ENCODE measurements at regions of chr2 and their contacts with region 1.

Region 1: DNA sequence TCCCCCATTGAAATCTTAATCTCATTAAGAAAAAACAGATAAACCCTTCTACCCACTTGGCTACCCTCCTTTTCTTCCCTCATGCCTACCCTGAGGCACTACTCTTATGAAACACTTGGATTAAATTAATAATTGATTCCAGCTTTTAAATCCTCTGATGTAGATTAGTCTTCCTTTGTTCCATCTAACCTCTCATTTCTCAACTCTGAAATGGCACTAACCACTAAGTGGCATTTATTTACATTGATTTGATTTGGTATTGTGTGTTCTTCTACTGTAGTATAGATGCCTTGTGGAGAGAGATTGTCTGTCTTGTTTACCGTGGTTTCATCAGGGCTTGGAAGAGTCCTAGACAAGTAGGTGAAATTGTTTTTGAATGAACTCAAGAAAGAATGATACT is 26.7 kb downstream of the ITGA4 start:
- DNase-seq: no peak
- H3K4me3 Mint-ChIP-seq: no peak overlapping the region
- H3K27ac Mint-ChIP-seq: peak overlapping the region; percentile 51
- H3K4me1 Mint-ChIP-seq: peaks cover 15% of the 10 kb centered on the region
- H3K27me3 Mint-ChIP-seq: no peaks in the 10 kb centered on the region

Region 2: GRCh38 chr2:181500201-181500600 is 16.3 kb after region 1 on chr2:
- intact Hi-C with region 1: loop called (anchors 2 kb)
- DNase-seq: no peak
- H3K4me3 Mint-ChIP-seq: no peak overlapping the region
- H3K27ac Mint-ChIP-seq: no peak overlapping the region
- H3K4me1 Mint-ChIP-seq: peaks cover 2% of the 10 kb centered on the region
- H3K27me3 Mint-ChIP-seq: no peaks in the 10 kb centered on the region

Region 3: GRCh38 chr2:181523756-181524155 is 39.9 kb after region 1 on chr2:
- intact Hi-C with region 1: loop called (anchors 5 kb)
- DNase-seq: no peak
- H3K4me3 Mint-ChIP-seq: no peak overlapping the region
- H3K27ac Mint-ChIP-seq: no peak overlapping the region
- H3K4me1 Mint-ChIP-seq: peaks cover 2% of the 10 kb centered on the region
- H3K27me3 Mint-ChIP-seq: no peaks in the 10 kb centered on the region

Measured in activated CD4-positive, alpha-beta T cell treated with anti-CD3 and anti-CD28 coated beads, Interleukin-2, amount 10 ng/mL, durations not matched to agents 24 days and 14 days (primary cell).